ENCODE measurements at regions of chr10 and their contacts with region 1.

Region 1: GRCh38 chr10:77165445-77166208 is 472.0 kb downstream of the KCNMA1 start:
- DNase-seq: peak; percentile 54
- H3K4me3 ChIP-seq: peak overlapping the region in 1 of 2 experiments; percentile 3; a peak in 1 of 4 replicates
- H3K27ac ChIP-seq: peak overlapping the region in 1 of 2 experiments; percentile 96; a peak in 1 of 4 replicates
- H3K4me1 ChIP-seq: peaks cover 25 to 29% of the 10 kb centered on the region in 2 experiments
- H3K27me3 ChIP-seq: no peaks in the 10 kb centered on the region
- CTCF ChIP-seq: peak; percentile 79
- EP300 ChIP-seq: no peak
- RAD21 ChIP-seq: peak; percentile 90

Region 2: DNA sequence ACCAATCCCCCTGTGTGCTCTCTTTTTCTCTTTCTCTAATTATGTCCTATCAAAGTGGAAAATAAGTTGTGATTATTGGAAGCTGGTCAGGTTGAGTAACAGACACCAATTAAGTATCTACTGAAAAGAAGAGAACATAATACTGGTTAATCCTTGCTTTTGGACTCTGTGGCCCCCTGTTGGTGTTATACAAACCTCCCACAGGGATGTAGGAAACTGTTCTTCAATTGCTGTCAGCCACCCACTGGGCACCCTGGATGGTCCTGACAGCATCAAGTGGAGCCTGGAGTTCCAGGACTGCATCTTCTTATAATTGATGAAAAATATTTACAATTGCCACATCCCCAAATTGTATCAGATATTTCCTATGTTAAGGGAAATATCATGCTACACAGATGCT is 467.7 kb before region 1 on chr10:
- CTCF ChIA-PET with region 1: no interaction called
- POLR2A ChIA-PET with region 1: no interaction called
- DNase-seq: no peak
- H3K4me3 ChIP-seq: no peak overlapping the region
- H3K27ac ChIP-seq: no peak overlapping the region
- H3K4me1 ChIP-seq: no peaks in the 10 kb centered on the region
- H3K27me3 ChIP-seq: no peaks in the 10 kb centered on the region
- CTCF ChIP-seq: peak; percentile 15; the same call in 1 of the 2 replicates
- EP300 ChIP-seq: no peak
- RAD21 ChIP-seq: no peak

Region 3: GRCh38 chr10:77011874-77012811 is 153.5 kb before region 1 on chr10:
- CTCF ChIA-PET with region 1: no interaction called
- POLR2A ChIA-PET with region 1: no interaction called
- DNase-seq: no peak
- H3K4me3 ChIP-seq: no peak overlapping the region
- H3K27ac ChIP-seq: peak overlapping the region in 1 of 2 experiments; percentile 44; a peak in 2 of 4 replicates
- H3K4me1 ChIP-seq: peaks cover 0 to 12% of the 10 kb centered on the region in 2 experiments; a peak in 1 of 4 replicates
- H3K27me3 ChIP-seq: no peaks in the 10 kb centered on the region
- CTCF ChIP-seq: no peak
- EP300 ChIP-seq: no peak
- RAD21 ChIP-seq: no peak

Region 4: DNA sequence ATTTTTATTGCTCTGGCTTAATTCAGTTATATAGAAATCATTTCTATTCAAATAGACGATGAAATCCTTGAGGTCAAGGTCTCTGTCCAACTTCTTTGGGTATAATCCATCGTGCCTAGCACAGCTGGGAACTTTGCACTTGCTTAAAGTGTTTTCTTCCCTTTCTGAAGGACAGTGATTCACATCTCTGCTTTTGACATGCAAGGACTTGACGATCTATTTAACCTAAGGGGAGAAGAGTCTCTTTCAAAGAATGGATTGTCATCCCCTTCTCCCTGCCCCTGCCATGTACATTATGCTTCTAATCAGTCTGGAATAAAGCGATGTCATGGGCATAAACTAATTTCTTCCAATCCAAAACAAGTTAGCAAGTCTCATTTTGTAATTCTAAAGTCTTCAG is 16.6 kb before region 1 on chr10:
- CTCF ChIA-PET with region 1: interaction called, 12 read pairs
- POLR2A ChIA-PET with region 1: no interaction called
- DNase-seq: no peak
- H3K4me3 ChIP-seq: no peak overlapping the region
- H3K27ac ChIP-seq: no peak overlapping the region
- H3K4me1 ChIP-seq: peaks cover 5% of the 10 kb centered on the region in 2 experiments; a peak in 3 of 4 replicates
- H3K27me3 ChIP-seq: no peaks in the 10 kb centered on the region
- CTCF ChIP-seq: no peak
- EP300 ChIP-seq: no peak
- RAD21 ChIP-seq: no peak

Region 5: GRCh38 chr10:77240041-77240652 is 74.5 kb after region 1 on chr10:
- CTCF ChIA-PET with region 1: interaction called, 25 read pairs
- POLR2A ChIA-PET with region 1: no interaction called
- DNase-seq: no peak
- H3K4me3 ChIP-seq: no peak overlapping the region
- H3K27ac ChIP-seq: peak overlapping the region in 1 of 2 experiments; percentile 60; a peak in 2 of 4 replicates
- H3K4me1 ChIP-seq: peaks cover 19 to 20% of the 10 kb centered on the region in 2 experiments; a peak in 3 of 4 replicates
- H3K27me3 ChIP-seq: no peaks in the 10 kb centered on the region
- CTCF ChIP-seq: no peak
- EP300 ChIP-seq: no peak
- RAD21 ChIP-seq: no peak

Region 6: DNA sequence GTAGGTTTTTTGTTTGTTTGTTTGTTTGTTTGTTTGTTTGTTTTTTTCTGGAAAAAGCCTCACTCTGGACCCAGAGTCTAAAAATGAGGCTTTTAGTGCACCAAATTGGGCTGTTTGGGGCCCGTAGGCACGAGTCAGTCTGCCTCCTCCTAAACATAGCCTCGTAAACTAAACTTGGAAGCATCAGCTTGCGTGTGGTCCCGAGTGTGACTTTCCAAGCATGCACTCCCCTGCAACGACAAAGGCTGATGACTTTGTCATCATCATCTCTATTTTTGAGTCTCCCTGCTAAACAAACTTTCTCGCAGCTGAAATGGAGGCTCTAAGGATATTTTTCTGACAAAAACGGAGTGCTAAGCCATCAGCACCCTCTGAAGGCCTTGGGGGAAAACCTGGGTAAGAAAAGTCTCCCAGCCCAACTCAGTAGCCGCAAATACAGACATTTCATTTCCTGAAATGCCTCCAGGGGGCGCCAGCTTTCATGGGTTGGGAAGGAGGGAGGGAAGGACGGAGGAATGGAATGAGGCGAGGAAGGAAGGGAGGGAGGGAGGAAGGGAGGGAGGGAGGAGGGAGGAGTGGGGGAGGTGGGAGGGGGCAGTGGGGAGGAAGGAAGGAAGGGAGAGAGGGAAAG is 226.1 kb after region 1 on chr10:
- CTCF ChIA-PET with region 1: interaction called, 10 read pairs
- POLR2A ChIA-PET with region 1: no interaction called
- DNase-seq: peak; percentile 66
- H3K4me3 ChIP-seq: no peak overlapping the region
- H3K27ac ChIP-seq: peak overlapping the region; percentile 78 to 95
- H3K4me1 ChIP-seq: peaks cover 49 to 57% of the 10 kb centered on the region in 2 experiments
- H3K27me3 ChIP-seq: no peaks in the 10 kb centered on the region
- CTCF ChIP-seq: peak; percentile 75
- EP300 ChIP-seq: no peak; a peak in 1 of 4 replicates
- RAD21 ChIP-seq: peak; percentile 78

Region 7: DNA sequence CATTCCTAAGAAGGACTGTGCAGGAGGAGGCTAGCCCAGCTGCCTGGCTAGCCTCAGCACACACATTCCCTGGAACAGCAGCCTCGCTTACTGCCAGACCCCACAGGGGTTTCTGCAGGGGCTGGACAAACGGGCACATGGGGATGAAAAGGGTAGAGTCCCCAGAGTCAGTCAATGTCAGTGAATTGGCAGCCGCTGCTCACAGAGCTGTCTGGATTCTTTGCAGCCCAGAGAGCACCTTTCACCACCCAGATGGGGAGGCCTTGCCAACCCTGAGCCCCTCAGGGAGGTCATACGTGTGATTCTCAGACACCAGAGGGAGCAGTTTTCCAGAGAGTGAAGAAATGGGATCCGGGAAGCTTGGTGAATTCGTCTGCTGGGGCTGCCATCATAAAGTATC is 328.7 kb after region 1 on chr10:
- CTCF ChIA-PET with region 1: interaction called, 18 read pairs
- POLR2A ChIA-PET with region 1: no interaction called
- DNase-seq: peak; percentile 69
- H3K4me3 ChIP-seq: no peak overlapping the region
- H3K27ac ChIP-seq: no peak overlapping the region
- H3K4me1 ChIP-seq: peaks cover 9 to 20% of the 10 kb centered on the region in 2 experiments; a peak in 3 of 4 replicates
- H3K27me3 ChIP-seq: no peaks in the 10 kb centered on the region
- CTCF ChIP-seq: peak; percentile 58
- EP300 ChIP-seq: no peak
- RAD21 ChIP-seq: peak; percentile 71